Left colon (tissue), 2 donors: ENCODE measurements at regions of chr6 and their contacts with region 1.

Region 1: DNA sequence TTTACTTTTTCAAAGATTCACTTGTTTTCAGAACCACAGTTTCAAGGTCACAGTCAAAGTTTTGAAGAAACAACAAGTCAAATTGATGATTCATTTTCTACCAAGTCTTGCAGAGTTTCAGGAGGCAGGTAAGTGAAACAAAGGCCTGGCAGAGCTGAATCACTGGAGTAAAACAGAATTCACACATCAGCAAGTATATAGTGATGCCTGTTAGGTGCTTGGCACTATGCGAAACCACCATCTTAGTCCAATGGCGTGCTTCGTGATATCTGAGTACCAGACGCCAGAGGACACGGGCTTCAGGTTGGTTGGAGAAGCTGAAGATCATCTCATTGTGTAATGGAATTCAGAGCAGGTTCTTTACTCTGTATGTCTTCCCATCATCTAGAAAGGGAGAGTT is 75.9 kb downstream of the RTN4IP1 start:
- DNase-seq: no peak
- ATAC-seq: no peak

Region 2: DNA sequence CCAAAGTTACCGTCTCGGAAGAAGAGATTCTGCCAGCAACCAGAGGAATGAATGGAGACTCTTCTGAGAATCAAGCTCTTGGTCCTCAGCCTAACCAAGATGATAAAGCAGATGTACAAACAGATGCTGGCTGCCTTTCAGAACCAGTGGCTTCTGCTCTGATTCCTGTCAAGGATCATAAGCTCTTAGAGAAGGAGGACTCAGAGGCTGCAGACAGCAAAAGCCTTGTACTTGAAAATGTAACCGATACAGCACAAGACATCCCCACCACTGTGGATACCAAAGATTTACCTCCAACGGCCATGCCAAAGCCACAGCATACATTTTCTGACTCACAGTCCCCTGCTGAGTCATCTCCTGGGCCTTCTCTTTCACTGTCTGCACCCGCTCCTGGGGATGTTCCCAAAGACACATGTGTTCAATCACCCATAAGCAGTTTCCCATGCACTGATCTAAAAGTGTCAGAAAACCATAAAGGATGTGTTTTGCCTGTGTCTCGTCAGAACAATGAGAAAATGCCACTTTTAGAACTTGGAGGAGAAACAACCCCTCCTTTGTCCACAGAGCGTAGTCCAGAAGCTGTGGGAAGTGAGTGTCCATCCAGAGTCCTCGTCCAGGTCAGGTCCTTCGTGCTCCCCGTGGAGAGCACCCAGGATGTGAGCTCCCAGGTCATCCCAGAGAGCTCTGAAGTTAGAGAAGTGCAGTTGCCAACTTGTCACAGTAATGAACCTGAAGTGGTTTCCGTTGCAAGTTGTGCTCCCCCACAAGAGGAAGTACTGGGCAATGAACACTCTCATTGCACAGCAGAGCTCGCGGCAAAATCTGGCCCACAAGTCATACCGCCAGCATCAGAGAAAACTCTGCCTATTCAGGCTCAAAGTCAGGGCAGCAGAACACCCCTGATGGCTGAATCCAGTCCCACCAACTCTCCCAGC is 33.7 kb before region 1 on chr6:
- intact Hi-C with region 1: loop called in 1 of 2 experiments (anchors 5 kb)
- DNase-seq: peak; percentile 45 to 48
- ATAC-seq: peak; percentile 22